Posterior vena cava (tissue), 2 donors: ENCODE measurements at regions of chr12 and their contacts with region 1.

Region 1: GRCh38 chr12:50934981-50935807 is 17.1 kb upstream of the HIGD1C start:
- DNase-seq: no peak

Region 2: DNA sequence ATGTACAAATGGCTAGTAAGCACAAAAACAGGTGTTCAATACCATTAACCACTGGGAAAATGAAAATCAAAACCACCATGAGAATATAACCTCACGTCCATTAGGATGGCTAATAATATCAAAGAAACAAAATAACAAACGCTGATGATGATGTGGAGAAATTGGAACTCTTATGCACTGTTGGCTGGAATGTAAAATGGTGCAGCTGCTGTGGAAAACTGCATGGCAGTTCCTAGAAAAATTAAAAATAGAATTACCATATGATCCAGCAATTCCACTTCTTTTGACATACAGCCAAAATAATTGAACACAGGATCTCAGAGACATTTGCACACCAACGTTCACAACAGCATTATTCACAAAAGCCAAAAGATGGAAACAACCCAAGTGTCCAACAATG is 41.0 kb before region 1 on chr12:
- intact Hi-C with region 1: no loop called
- DNase-seq: no peak

Region 3: DNA sequence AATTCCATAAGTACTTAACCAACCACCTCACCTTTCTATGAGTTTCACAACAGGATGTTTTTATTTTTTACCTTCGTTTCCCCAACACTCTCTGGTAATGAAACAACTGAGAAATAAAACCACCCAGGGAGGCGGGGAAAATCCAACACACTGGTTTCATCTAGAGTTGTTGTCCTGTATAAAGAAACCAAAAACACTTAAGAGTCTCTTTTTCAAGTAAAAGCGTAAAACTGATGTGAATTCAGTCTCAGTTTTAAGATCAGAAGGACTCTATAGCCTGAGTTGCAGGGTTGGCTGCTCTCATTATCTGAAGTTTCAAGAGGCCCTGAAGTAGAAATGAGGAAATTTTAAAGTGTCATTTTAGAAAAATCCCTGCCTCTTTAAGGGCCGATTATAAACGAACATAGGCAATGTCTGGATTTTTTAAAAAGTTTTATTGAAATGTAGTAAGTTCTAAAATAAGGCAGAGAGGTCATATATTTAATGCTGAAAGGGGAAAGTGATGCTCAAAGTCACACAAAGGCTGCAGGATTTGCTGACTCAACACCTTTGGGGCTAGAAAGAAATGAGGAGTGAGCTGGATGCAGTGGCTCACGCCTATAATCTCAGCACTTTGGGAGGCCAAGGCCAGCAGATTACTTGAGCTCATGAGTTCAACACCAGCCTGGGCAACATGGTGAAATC is 44.3 kb after region 1 on chr12:
- intact Hi-C with region 1: loop called in 1 of 2 experiments (anchors 5 kb)
- DNase-seq: no peak

Region 4: GRCh38 chr12:51980051-51980808 is 1045.0 kb after region 1 on chr12:
- intact Hi-C with region 1: no loop called
- DNase-seq: peak; percentile 88